ENCODE measurements at regions of chr20 and their contacts with region 1.

Region 1: DNA sequence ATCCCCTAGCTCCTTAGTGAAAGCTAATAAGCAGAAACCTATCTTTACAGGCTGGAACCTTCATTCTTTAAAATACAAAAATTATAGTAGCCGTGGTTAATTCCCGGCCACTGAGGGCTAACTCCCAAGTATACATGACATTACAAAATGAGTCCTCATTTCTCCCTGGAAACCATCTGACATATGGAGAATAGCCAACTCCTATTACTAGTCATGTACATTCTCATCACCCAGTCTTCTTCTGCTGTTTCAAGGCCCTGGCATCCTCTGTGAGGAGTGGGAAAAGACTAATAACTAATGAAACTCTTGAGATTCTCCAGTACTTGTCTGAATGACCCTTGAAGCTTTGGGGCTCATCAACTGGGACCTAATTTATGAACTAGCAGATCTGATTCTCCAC is 30.2 kb downstream of the CSNK2A1 start:
- DNase-seq: no peak
- H3K4me3 ChIP-seq: no peak overlapping the region
- H3K27ac ChIP-seq: no peak overlapping the region
- H3K27me3 ChIP-seq: no peaks in the 10 kb centered on the region
- CTCF ChIP-seq: no peak

Region 2: DNA sequence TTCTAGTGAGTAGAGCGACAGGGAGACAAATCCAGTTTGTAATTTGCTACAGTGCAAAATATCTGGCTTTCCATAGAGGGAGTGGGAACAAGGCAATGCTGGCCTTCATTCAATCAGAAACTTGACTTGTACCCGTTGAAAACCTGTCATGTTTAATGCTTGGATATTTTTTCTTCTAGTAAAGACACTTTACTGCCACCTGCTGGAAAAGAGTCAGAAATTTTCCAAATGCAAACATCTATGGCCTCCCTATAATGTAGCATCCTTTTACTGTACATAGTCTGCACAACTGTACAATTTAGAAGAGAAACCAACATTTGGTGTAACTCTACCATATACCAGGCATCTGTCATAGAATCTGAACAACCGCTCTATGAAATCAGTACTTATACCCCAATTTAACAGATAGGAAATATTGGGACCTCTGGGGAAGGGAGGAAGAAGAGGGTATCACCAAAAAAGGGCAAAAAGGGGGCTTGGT is 34.4 kb before region 1 on chr20:
- CTCF ChIA-PET with region 1: interaction called, 10 read pairs
- POLR2A ChIA-PET with region 1: no interaction called
- DNase-seq: peak; percentile 42
- H3K4me3 ChIP-seq: no peak overlapping the region
- H3K27ac ChIP-seq: peak overlapping the region; percentile 86
- H3K27me3 ChIP-seq: no peaks in the 10 kb centered on the region
- CTCF ChIP-seq: peak; percentile 63

Region 3: DNA sequence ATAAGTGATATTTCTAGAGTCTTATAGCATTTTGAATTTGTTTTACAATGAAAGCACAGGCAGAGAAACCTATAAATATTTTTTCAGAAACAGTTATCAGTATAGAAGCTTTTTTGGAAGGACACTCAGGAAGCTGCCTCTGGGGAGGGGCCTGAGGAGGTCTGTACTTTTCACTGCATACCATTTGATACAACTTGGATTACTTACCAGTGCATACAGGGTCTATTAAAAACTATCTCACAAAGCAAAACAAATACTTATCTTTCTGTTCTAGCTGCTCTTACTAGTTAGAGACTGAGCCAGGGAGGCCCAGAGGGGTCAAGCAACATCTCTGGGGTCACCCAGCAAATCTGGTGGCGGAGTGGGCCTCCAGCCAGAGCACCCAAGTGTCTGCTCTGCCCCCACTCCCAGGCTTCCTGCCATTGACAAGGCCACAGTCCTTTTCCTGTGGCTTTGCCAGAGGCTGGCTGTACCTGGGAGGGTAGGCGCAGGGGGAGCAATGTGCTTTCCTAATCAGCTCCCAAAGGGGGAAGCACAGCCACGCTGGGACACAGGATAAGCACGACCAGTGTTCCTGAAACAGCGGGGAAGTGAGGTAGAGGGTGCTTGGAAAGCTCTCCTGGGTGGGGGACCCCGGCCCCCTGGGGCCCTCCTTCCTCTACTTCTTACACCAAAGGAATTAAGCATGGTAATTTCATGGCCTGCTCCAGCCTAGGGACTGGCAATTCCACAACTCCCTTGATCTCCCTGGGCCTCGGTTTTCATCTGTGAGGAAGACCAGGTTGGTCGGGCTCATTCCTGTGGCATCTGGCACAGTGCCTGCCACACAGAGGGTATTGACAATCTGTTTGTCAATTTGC is 88.9 kb after region 1 on chr20:
- CTCF ChIA-PET with region 1: no interaction called
- POLR2A ChIA-PET with region 1: no interaction called
- DNase-seq: no peak
- H3K4me3 ChIP-seq: no peak overlapping the region
- H3K27ac ChIP-seq: no peak overlapping the region
- H3K27me3 ChIP-seq: peaks cover 11% of the 10 kb centered on the region
- CTCF ChIP-seq: no peak

Measured in AG04450 (cell line).